ENCODE measurements at regions of chr3 and their contacts with region 1.

Region 1: GRCh38 chr3:170414202-170414663 is 4.4 kb upstream of the CLDN11 start:
- DNase-seq: peak; percentile 80
- H3K4me3 ChIP-seq: no peak overlapping the region
- H3K27ac ChIP-seq: no peak overlapping the region
- H3K4me1 ChIP-seq: peaks cover 5% of the 10 kb centered on the region
- H3K27me3 ChIP-seq: no peaks in the 10 kb centered on the region
- CTCF ChIP-seq: peak; percentile 90 to 92
- POLR2A ChIP-seq: no peak

Region 2: DNA sequence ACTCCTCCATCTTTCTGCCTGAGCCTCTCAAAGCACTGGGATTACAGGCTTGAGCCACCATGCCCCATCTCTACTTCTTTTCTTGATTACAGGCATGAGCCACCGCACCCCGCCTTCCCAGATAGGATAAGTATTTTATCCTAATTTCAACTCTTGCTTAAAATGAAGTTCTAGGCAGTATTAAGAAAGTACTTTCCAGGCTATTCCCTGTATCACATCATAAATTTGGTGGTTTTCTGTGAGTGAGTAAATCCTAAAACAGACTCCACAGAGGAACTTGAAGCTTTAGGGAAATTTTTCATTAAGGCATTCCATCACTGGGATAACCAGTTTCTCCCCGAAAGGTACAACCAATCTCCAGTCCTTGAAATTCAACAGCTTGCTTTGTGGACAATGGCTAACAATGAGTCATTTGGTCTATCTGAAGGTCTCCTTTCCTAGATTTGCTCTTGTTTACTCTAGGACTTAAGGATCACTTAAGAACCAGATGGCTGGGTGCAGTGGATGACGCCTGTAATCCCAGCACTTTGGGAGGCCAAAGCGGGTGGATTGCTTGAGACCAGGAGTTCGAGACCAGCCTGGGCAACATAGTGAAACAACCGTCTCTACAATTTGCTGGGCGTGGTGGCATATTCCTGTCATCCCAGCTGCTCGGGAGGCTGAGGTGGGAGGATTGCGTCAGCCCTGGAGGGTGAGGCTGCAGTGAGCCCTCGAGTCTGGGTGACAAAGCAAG is 106.4 kb before region 1 on chr3:
- CTCF ChIA-PET with region 1: interaction called, 56 read pairs
- POLR2A ChIA-PET with region 1: no interaction called
- dilution Hi-C with region 1: no loop called
- intact Hi-C with region 1: loop called (anchors 1 kb)
- DNase-seq: no peak
- H3K4me3 ChIP-seq: no peak overlapping the region
- H3K27ac ChIP-seq: no peak overlapping the region
- H3K4me1 ChIP-seq: peaks cover 7% of the 10 kb centered on the region
- H3K27me3 ChIP-seq: no peaks in the 10 kb centered on the region
- CTCF ChIP-seq: no peak
- POLR2A ChIP-seq: no peak

Region 3: DNA sequence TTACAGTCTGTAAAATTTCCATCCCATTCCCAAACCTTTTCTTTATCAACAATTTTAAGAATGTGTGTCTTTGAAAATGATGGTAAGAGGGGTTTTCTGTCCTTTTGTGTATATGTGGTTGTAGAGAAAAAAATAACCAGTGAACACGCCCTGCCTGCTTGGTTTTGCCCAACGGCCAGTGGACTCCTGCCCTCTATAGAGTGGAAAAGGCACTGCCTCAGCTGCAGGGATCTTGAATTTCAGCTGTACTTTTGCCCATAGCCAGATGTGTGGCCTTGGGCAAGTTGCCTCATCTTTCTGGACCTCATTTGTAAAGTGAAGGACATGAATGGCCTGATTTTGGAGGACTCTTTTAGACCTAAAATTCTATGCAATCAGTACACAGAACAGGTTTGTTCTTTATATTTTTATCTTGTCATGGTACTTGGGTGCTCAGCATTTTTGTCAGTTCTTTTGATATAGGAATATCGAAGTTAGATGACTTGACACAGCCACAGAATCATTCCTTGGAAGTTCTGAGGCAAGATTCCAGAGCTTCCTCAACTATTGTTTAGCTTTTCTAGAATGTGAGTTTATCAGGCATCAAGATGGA is 85.4 kb after region 1 on chr3:
- CTCF ChIA-PET with region 1: interaction called, 18 read pairs
- POLR2A ChIA-PET with region 1: no interaction called
- dilution Hi-C with region 1: no loop called
- intact Hi-C with region 1: loop called (anchors 1 kb)
- DNase-seq: peak; percentile 39
- H3K4me3 ChIP-seq: no peak overlapping the region
- H3K27ac ChIP-seq: no peak overlapping the region
- H3K4me1 ChIP-seq: no peaks in the 10 kb centered on the region
- H3K27me3 ChIP-seq: no peaks in the 10 kb centered on the region
- CTCF ChIP-seq: peak; percentile 50 to 63
- POLR2A ChIP-seq: no peak

Region 4: DNA sequence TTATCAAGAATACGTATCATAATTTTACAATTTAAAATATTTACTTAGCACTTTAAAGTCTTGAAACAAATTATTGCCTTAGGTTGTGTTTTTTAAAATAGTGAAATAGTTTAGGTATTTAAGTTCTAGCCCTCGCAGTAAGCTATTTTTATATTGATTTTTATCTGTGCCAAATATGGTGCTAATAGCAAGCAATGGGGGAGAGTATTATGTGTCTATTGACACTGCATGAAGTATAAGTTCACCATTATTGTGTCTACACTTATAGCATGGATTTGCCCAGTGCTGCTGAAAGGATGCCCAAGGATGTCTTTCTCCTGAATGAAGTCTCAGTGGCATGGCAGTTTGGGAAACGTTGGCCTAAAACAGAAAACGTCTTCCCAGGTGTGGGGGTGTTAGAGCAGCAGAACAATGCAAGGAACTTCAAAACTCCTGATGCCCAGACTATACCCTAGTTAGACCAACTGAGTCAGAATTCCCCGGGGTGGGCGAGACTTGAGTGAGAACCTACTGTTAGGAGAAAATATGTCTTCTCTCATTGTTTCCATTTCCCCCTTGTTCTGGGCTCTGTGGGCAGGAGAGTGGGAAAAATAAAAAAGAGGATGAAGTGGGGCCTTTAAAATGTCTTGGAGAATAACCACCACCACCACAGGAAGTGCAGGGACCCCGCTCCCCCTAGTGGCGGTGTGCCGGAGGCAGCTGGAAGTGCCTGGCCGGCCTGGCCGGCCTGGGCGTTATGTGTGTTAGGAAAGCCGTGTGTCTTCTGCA is 275.8 kb after region 1 on chr3:
- CTCF ChIA-PET with region 1: interaction called, 3 read pairs
- POLR2A ChIA-PET with region 1: no interaction called
- dilution Hi-C with region 1: no loop called
- intact Hi-C with region 1: loop called (anchors 2 kb)
- DNase-seq: no peak
- H3K4me3 ChIP-seq: no peak overlapping the region
- H3K27ac ChIP-seq: no peak overlapping the region
- H3K4me1 ChIP-seq: peaks cover 11% of the 10 kb centered on the region
- H3K27me3 ChIP-seq: no peaks in the 10 kb centered on the region
- CTCF ChIP-seq: peak; percentile 59 to 61
- POLR2A ChIP-seq: no peak

Region 5: DNA sequence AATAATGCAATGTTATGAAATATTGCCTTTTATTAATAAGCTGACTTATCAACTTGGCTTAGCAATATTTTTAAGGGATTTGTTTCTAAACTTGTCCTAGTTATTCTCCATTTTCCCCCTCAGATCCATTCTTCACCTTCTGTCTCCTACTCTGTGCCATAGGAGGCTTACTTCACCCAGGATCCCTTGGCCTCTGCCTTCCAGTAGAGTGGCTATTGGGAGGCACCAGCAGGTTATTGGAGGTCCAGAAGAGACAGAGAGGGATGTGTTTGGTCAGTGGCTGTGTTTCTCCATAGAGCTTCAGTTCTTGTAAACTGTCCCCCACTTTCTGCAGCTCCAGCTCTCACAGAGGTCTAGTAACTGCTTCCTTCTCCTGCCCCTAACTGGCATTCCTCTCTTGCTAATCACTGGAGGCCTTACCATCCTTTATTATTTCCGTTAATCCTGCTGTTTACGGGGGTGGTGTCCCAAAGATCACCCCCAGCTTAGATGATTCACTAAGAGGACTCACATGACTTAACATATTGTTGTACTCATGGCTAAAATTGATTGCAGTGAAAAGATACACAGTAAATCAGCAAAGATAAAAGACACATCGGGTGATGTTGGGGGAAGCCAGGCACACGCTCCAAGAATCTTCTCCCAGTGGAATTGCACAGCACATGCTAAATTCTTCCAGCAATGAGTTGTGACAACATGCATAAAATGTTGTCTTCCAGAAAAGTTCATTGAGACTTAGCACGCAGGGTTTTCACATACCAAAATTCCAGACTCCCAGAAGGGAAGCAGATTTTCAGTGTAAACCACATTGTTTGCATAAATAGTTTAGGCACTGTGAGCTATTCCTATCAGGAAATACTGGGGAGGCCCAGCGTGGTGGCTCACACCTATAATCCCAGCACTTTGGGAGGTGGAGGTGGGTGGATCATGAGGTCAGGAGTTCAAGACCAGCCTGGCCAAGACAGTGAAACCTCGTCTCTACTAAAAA is 388.2 kb after region 1 on chr3:
- CTCF ChIA-PET with region 1: interaction called, 17 read pairs
- POLR2A ChIA-PET with region 1: no interaction called
- dilution Hi-C with region 1: no loop called
- intact Hi-C with region 1: no loop called
- DNase-seq: peak; percentile 92
- H3K4me3 ChIP-seq: no peak overlapping the region
- H3K27ac ChIP-seq: peak overlapping the region; percentile 76
- H3K4me1 ChIP-seq: peaks cover 36% of the 10 kb centered on the region
- H3K27me3 ChIP-seq: no peaks in the 10 kb centered on the region
- CTCF ChIP-seq: no peak
- POLR2A ChIP-seq: peak; percentile 28

Region 6: GRCh38 chr3:170848292-170848917 is 434.2 kb after region 1 on chr3:
- CTCF ChIA-PET with region 1: interaction called, 177 read pairs
- POLR2A ChIA-PET with region 1: interaction called, 5 read pairs
- dilution Hi-C with region 1: no loop called
- intact Hi-C with region 1: loop called (anchors 1 kb)
- DNase-seq: peak; percentile 38
- H3K4me3 ChIP-seq: no peak overlapping the region
- H3K27ac ChIP-seq: no peak overlapping the region
- H3K4me1 ChIP-seq: no peaks in the 10 kb centered on the region
- H3K27me3 ChIP-seq: no peaks in the 10 kb centered on the region
- CTCF ChIP-seq: peak in 1 of 2 donors; percentile 14
- POLR2A ChIP-seq: no peak